ENCODE measurements at regions of chr12 and their contacts with region 1.

Region 1: GRCh38 chr12:50050410-50051098 is 6.8 kb upstream of the ASIC1 start:
- DNase-seq: peak; percentile 41 to 93
- H3K4me3 ChIP-seq: no peak overlapping the region
- CTCF ChIP-seq: no peak
- POLR2A ChIP-seq: no peak

Region 2: GRCh38 chr12:49974231-49974675 is 76.3 kb before region 1 on chr12:
- intact Hi-C with region 1: loop called (anchors 5 kb)
- DNase-seq: no peak
- H3K4me3 ChIP-seq: no peak overlapping the region
- CTCF ChIP-seq: no peak
- POLR2A ChIP-seq: no peak